A549 (cell line): ENCODE measurements at regions of chr11 and their contacts with region 1.

Region 1: DNA sequence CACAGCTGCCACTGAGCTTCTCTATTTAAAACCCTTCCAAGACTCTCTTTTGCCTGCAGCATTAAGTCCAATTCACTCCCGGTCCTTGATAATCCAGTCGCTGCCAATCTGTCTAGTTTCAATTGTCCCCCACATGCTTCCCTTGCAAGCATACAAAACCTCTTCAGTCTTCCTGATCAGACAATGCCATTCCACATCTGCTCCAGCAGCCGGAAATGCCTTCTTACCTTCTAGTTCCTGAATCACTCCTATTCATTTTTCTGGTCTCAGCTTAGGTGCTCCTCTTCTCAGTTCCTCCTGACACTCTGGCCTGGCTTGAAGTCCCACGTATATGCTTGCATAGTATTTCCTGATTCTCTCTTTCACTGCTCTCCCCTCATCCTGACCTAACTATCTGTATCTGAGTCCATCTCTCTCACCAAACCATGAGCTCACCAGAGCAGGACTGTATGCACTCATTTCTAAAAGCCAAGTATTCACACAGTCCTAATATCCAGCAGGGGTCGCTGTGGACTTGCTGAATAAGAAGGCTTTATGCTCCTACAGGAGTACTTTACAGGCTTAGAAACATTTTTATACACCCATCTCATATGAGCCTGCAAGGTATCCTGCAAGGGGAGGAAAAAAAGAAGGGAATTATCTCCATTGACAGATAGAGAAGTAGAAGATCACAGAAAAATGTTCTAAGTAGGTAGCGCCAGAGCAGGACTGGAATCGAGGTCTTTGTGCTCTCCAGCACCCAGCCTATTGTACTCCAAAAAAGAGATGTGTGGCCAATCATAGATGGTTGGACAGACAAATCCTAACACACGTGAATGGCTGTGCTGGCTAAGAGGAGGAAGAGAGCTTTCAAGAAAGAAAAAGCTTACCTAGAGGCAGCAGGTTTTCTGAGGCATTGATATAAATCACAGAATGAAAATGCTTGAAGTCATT is 19.2 kb downstream of the XRRA1 start:
- DNase-seq: peak; percentile 60 to 91
- ATAC-seq: peak; percentile 97 to 99
- H3K4me3 ChIP-seq: no peak overlapping the region
- H3K27ac ChIP-seq: no peak overlapping the region
- H3K4me1 ChIP-seq: peaks cover 9% of the 10 kb centered on the region; the same call in 2 of the 3 replicates
- CTCF ChIP-seq: peak; percentile 92
- EP300 ChIP-seq: no peak
- POLR2A ChIP-seq: no peak
- RAD21 ChIP-seq: peak; percentile 81 to 90

Region 2: DNA sequence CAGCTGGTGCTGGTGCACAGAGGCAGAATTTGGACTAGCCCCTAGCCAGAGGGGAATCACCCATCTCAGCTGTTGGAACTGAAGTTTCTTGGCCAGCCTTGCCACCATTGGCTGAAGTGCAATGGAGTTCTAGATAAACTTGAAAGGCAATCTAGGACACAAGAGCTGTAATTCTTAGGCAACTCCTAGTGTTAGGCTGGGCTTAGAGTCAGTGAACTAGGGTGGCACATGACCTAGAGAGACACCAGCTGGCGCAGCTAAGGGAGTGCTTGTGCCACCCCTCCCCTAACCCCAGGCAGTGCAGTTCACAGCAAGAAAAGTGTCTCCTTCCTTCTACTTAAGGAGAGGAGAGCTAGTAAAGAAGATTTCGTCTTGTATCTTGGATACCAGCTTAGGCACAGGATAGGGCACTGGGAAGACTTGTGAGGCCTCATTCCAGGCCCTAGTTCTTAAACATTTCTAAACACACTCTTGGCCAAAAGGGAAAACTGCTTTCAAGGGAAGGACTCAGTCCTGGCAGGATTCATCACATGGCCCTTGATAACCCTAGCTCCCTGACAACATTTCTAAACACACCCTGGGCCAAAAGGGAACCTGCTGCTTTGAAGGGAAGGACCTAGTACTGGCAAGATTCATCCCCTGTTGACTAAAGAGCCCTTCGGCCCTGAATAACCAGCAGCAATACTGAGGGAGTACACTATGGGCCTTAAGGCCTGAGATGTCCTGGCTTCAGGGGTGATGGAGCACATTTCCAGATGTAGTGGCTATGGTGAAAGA is 34.2 kb before region 1 on chr11:
- CTCF ChIA-PET with region 1: no interaction called
- POLR2A ChIA-PET with region 1: no interaction called
- DNase-seq: no peak
- ATAC-seq: peak in 1 of 2 experiments; percentile 19; a peak in 1 of 6 replicates
- H3K4me3 ChIP-seq: no peak overlapping the region
- H3K27ac ChIP-seq: no peak overlapping the region
- H3K4me1 ChIP-seq: no peaks in the 10 kb centered on the region
- CTCF ChIP-seq: no peak
- EP300 ChIP-seq: no peak
- POLR2A ChIP-seq: no peak
- RAD21 ChIP-seq: no peak

Region 3: GRCh38 chr11:74909385-74909784 is 20.3 kb before region 1 on chr11:
- CTCF ChIA-PET with region 1: interaction called, 16 read pairs
- POLR2A ChIA-PET with region 1: no interaction called
- DNase-seq: no peak
- ATAC-seq: no peak
- H3K4me3 ChIP-seq: no peak overlapping the region
- H3K27ac ChIP-seq: no peak overlapping the region
- H3K4me1 ChIP-seq: no peaks in the 10 kb centered on the region
- CTCF ChIP-seq: no peak
- EP300 ChIP-seq: no peak
- POLR2A ChIP-seq: no peak
- RAD21 ChIP-seq: no peak

Region 4: DNA sequence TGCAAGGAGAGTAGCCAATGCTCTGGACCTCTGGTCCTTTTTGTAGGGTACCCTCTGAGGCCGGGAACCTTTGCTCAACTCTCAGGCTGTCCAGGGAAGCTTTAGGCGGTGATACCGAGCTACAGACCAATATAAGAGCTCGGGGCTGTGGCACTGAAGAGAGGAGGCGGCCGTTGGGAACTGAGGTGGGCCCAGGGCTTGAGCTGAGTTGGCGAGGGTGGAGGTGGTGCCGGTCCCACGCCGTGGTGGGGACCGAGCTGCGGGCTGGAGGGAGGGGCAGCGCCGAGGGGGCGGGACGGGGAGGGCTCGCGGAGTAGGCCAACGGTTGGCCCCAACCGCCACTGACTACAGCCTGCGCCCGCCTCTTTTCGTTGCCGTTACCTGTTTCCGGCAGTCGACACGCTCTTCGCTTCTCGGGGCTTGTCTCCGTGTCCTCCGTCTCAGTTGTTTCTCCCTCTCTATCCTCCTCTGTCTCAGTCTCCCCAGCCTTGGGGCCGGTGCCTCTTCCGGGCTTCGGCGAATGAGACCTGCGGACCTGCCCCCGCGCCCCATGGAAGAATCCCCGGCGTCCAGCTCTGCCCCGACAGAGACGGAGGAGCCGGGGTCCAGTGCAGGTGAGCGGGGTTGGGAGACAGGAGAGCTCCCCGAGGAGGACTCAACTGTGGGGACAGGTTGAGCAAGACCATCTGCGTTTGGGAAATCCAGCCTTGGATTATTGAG is 59.0 kb after region 1 on chr11 and contains the start of gene NEU3:
- CTCF ChIA-PET with region 1: interaction called, 14 read pairs
- POLR2A ChIA-PET with region 1: interaction called, 4 read pairs
- DNase-seq: peak; percentile 79 to 81
- ATAC-seq: peak; percentile 95 to 98
- H3K4me3 ChIP-seq: peak within 1 kb of the TSS; percentile 92
- H3K27ac ChIP-seq: peak within 1 kb of the TSS; percentile 86 to 89
- H3K4me1 ChIP-seq: peaks cover 12% of the 10 kb centered on the region; the same call in 2 of the 3 replicates
- CTCF ChIP-seq: no peak
- EP300 ChIP-seq: no peak
- POLR2A ChIP-seq: peak; percentile 67
- RAD21 ChIP-seq: no peak
- polyA plus RNA-seq, gene NEU3: 5.5 and 6.2 TPM in 2 replicates

Region 5: DNA sequence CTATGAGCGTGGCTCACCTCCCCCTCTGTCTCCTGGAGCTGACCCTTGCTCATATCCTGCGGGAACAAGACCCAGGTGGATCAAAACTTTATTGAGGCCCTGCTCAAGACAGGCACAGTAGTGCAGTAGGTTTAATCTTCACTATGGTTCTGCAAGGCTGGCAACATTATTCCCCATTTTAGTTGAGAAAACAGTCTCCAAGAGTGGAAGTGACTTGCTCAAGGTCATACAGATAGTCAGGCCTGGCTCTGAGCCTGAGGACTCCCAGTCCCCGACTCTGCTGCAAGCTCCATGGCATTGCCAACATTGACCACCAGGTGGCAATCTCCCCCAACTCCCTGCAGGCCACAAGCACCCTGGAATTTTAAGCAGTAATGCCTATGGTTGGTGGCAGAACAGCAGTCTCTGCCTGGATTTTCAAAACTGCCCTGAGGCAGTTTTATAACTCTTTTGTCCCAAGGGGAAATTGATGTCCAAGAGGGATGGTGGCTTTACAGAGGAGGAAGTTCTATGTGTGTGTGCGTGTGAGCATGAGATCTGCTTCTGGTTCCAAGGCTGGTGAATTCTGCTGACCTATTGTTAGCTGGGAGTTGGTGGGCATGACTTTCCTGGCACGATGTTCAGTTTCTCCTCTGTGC is 93.2 kb after region 1 on chr11:
- CTCF ChIA-PET with region 1: interaction called, 26 read pairs
- POLR2A ChIA-PET with region 1: no interaction called
- DNase-seq: peak; percentile 81 to 86
- ATAC-seq: peak; percentile 96 to 99
- H3K4me3 ChIP-seq: no peak overlapping the region
- H3K27ac ChIP-seq: no peak overlapping the region
- H3K4me1 ChIP-seq: no peaks in the 10 kb centered on the region
- CTCF ChIP-seq: peak; percentile 95
- EP300 ChIP-seq: no peak
- POLR2A ChIP-seq: no peak
- RAD21 ChIP-seq: peak; percentile 91 to 98

Region 6: GRCh38 chr11:75270896-75271418 is 341.3 kb after region 1 on chr11:
- CTCF ChIA-PET with region 1: interaction called, 11 read pairs
- POLR2A ChIA-PET with region 1: no interaction called
- DNase-seq: peak; percentile 37 to 47
- ATAC-seq: peak; percentile 49 to 63; a peak in 3 of 6 replicates
- H3K4me3 ChIP-seq: no peak overlapping the region
- H3K27ac ChIP-seq: no peak overlapping the region
- H3K4me1 ChIP-seq: no peaks in the 10 kb centered on the region
- CTCF ChIP-seq: peak; percentile 56
- EP300 ChIP-seq: no peak
- POLR2A ChIP-seq: no peak
- RAD21 ChIP-seq: peak; percentile 53 to 56; a peak in 4 of 5 replicates